Dorsolateral prefrontal cortex (tissue), 120 donors: ENCODE measurements at regions of chr12 and their contacts with region 1.

Region 1: GRCh38 chr12:112450725-112451124 is 32.0 kb downstream of the PTPN11 start:
- DNase-seq: peak in 1 of 10 donors; percentile 12
- H3K4me3 ChIP-seq: no peak overlapping the region
- H3K27ac ChIP-seq: peak overlapping the region in 26 of 59 donors; percentile 0 to 66 (median 34)
- H3K27me3 ChIP-seq: no peaks in the 10 kb centered on the region
- CTCF ChIP-seq: peak in 54 of 56 donors; percentile 31 to 75 (median 55)

Region 2: DNA sequence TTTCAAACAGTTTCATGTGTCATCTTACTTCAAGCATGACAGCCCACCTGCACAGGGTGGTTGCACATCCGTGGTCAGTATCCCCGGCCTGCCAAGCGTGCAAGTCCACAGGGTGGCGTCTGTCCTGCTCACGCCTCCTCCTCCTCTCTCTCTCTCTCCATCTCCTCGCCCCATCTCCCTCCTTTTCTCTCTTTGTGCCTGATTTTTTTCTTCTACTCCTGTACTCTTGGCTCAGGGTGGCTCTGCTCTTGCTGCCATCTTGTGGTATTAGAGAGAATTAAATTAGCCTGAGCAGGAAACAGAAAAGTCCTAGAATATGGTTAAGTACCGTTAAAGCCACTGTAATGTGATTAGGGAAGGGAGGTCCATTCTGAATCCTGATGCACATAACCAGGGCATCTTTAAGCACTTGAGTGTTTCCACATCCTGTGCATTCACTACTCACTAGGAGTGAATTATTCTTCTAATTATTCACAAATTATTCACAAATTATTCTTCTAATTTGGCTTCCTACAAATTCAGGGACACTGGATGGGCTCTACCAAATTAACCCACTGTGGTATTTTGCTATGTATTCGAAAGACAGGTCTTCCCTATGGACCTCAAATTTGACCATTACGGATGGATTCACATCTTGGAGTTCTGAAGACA is 580.3 kb after region 1 on chr12:
- intact Hi-C with region 1: loop called in 1 of 2 experiments (anchors 5 kb)
- DNase-seq: peak in 4 of 10 donors; percentile 17 to 61 (median 35)
- H3K4me3 ChIP-seq: peak overlapping the region in 3 of 59 donors; percentile 1 to 24 (median 21)
- H3K27ac ChIP-seq: no peak overlapping the region
- H3K27me3 ChIP-seq: peaks cover 0 to 7% (median 0%) of the 10 kb centered on the region in 45 donors
- CTCF ChIP-seq: peak; percentile 43 to 89 (median 74)